ENCODE measurements at regions of chr6 and their contacts with region 1.

Region 1: GRCh38 chr6:105087571-105088211 is 92.1 kb downstream of the POPDC3 start:
- DNase-seq: peak; percentile 8 to 57
- ATAC-seq: peak; percentile 56 to 80; a peak in 3 of 6 replicates
- H3K4me3 ChIP-seq: no peak overlapping the region
- H3K27ac ChIP-seq: no peak overlapping the region
- H3K4me1 ChIP-seq: no peaks in the 10 kb centered on the region
- CTCF ChIP-seq: peak; percentile 85
- EP300 ChIP-seq: no peak
- POLR2A ChIP-seq: no peak
- RAD21 ChIP-seq: peak; percentile 85 to 86

Region 2: DNA sequence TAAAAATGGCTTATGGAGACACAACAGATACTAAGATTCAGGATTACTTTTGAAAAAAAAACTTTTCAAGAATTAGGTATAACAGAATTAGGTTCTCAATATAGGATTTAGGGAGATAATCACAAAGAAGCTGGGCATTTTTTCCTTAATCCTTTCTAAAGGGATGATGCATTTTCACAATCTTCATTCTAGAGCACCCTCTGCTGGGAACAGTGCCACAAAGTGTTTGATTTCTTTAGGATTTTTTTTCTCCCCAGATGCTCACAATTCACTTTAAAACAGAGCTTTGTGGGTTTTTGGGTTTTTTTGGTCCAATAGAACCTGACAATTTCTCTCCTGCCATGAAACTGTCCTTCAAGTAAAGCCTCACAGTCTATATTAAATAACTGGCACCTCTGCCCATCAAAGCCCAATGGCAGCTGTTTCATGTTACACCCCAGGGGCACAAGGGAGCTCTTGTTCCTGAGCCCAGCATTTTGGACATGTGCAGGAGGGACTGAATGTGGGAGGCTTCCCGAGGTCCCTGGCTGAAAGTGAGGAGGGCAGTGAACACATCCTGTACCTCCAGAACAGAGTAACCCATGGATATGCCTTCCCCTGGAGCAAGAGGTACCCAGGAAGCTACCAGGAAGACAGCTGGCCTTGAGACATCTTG is 275.5 kb after region 1 on chr6:
- CTCF ChIA-PET with region 1: interaction called, 20 read pairs
- POLR2A ChIA-PET with region 1: interaction called, 3 read pairs
- DNase-seq: no peak
- ATAC-seq: peak in 1 of 2 experiments; percentile 26; a peak in 1 of 6 replicates
- H3K4me3 ChIP-seq: no peak overlapping the region
- H3K27ac ChIP-seq: no peak overlapping the region
- H3K4me1 ChIP-seq: peaks cover 18% of the 10 kb centered on the region
- CTCF ChIP-seq: peak; percentile 54
- EP300 ChIP-seq: no peak
- POLR2A ChIP-seq: no peak
- RAD21 ChIP-seq: peak; percentile 40 to 50; a peak in 4 of 5 replicates

Region 3: GRCh38 chr6:105402939-105403935 is 315.5 kb after region 1 on chr6 and contains the start of gene PREP:
- CTCF ChIA-PET with region 1: interaction called, 11 read pairs
- POLR2A ChIA-PET with region 1: no interaction called
- DNase-seq: peak; percentile 82 to 85
- ATAC-seq: peak; percentile 95 to 96
- H3K4me3 ChIP-seq: peak within 1 kb of the TSS; percentile 94
- H3K27ac ChIP-seq: peak within 1 kb of the TSS; percentile 94 to 96
- H3K4me1 ChIP-seq: peaks cover 15% of the 10 kb centered on the region; the same call in 1 of the 3 replicates
- CTCF ChIP-seq: peak; percentile 60
- EP300 ChIP-seq: no peak
- POLR2A ChIP-seq: peak; percentile 64
- RAD21 ChIP-seq: peak; percentile 29 to 44; a peak in 4 of 5 replicates
- polyA plus RNA-seq, gene PREP: 18.9 and 29.1 TPM in 2 replicates